ENCODE measurements at regions of chr1 and their contacts with region 1.

Region 1: DNA sequence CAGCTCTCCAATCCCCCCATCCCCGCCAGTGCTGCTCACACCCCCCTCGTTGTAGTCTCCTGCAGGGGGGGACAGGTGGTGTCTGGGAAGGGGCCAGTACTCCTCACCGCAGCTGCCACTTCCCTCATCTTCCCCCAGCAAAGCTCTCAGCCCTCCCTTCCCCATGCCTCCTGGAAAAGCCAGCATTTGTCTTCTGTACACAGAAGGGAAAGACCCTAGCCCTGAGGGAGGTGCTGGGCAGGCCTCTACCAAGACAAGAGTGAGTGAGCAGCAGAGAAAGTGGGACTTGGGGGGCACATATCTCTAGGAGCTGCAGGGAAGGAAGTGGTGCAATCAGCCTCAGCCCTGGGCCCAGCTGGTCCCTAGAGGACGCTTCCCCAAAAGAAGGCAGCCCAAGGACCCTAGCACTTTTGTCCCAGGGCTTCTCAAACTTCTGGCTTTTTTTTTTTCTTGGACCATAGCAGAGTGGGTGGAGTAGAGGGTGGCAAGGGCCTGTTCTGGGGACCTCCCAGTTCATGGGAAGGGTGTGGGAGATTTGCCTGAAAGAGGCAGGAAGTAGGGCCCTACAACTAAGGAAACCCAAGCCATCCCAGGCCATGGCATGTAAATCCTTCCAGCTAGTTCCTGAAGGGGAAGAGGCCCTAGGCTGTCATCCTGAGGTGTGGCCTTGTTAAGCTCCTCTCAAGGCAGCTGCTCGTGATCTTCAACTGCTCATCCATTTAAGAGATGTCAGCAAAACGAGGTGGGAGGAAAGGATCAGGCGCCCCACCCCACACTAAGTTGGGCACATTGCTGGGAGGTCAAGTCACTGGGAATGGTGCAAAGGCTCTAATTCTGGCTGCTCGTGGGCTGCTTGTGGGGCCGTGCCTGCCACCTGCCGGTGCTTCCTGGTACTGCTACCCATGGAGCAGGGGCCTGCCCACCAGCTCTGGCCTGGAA is 12.6 kb downstream of the ZC3H12A start:
- DNase-seq: no peak
- H3K4me3 ChIP-seq: no peak overlapping the region
- H3K27me3 ChIP-seq: no peaks in the 10 kb centered on the region
- CTCF ChIP-seq: peak; percentile 99

Region 2: GRCh38 chr1:37001703-37002102 is 485.2 kb before region 1 on chr1:
- CTCF ChIA-PET with region 1: no interaction called
- POLR2A ChIA-PET with region 1: no interaction called
- DNase-seq: no peak
- H3K4me3 ChIP-seq: no peak overlapping the region
- H3K27me3 ChIP-seq: no peaks in the 10 kb centered on the region
- CTCF ChIP-seq: no peak

Region 3: GRCh38 chr1:37449936-37450335 is 37.0 kb before region 1 on chr1:
- CTCF ChIA-PET with region 1: interaction called, 304 read pairs
- POLR2A ChIA-PET with region 1: no interaction called
- DNase-seq: no peak
- H3K4me3 ChIP-seq: no peak overlapping the region
- H3K27me3 ChIP-seq: no peaks in the 10 kb centered on the region
- CTCF ChIP-seq: no peak

Region 4: DNA sequence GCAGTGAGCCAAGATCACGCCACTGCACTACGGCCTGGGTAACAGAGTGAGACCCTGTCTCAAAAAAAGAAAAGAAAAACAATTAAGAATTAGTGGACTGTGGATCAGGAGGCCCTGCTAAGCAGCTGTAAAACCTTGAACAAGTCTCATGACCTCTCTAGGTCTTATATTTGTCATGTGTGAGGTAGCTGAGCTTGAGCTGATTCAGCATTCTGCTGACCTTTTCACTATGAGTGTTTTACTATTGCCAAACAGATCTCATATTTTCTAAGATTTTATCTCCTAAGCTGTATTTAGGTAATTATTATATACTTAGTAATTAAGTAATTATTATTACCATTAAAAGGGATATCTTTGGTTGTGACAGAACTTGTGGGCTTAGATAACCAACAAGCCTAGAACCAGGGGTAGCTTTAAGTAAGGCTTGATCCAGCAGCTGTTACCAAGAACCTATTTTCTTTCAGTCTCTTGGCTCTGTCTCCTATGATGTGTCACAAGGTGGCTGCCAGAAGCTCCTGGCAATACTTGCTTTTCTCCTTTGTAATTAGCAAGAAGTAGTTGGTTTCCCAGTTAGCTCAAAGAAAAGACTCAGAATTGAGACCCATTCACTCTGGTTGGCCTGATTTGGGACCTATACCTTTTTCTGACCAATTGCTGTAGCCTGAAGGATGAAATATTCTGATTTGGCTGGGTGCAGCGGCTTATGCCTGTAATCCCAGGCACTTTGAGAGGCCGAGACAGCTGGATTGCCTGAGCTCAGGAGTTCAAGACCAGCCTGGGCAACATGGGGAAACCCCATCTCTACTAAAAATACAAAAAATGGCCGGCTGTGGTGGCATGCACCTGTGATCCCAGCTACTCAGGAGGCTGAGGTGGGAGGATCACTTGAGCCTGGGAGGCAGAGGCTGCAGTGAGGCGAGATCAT is 21.1 kb before region 1 on chr1:
- CTCF ChIA-PET with region 1: interaction called, 116 read pairs
- POLR2A ChIA-PET with region 1: interaction called, 4 read pairs
- DNase-seq: no peak
- H3K4me3 ChIP-seq: no peak overlapping the region
- H3K27me3 ChIP-seq: no peaks in the 10 kb centered on the region
- CTCF ChIP-seq: no peak

Region 5: GRCh38 chr1:37474046-37474759 is 12.7 kb before region 1 on chr1 and contains the start of gene ZC3H12A:
- CTCF ChIA-PET with region 1: interaction called, 116 read pairs
- POLR2A ChIA-PET with region 1: no interaction called
- DNase-seq: no peak
- H3K4me3 ChIP-seq: peak within 1 kb of the TSS; percentile 75
- H3K27me3 ChIP-seq: no peaks in the 10 kb centered on the region
- CTCF ChIP-seq: no peak
- polyA plus RNA-seq, gene ZC3H12A: 4.8 and 8.9 TPM in 2 replicates

Region 6: GRCh38 chr1:37498872-37499617 is 12.1 kb after region 1 on chr1:
- CTCF ChIA-PET with region 1: interaction called, 50 read pairs
- POLR2A ChIA-PET with region 1: no interaction called
- DNase-seq: no peak
- H3K4me3 ChIP-seq: no peak overlapping the region
- H3K27me3 ChIP-seq: no peaks in the 10 kb centered on the region
- CTCF ChIP-seq: no peak

Region 7: DNA sequence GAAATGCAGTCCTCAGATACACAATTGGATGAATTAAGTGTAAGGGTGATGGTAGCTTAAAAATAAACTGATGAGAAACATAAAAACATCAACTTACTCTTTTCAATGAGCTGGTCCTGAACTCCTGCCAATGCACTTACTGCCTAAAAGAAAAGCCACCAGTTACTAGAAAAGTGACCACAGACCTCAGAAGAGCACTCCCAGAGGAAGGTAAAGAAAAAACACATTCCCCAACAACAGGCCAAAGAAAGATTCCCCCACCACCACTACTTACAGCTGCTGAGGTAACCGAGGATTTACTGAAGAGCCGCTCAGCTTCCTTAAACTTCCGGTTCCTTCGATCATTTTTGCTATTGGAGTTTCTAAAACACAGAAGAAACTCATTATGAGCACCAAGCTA is 22.2 kb after region 1 on chr1:
- CTCF ChIA-PET with region 1: interaction called, 35 read pairs
- POLR2A ChIA-PET with region 1: no interaction called
- DNase-seq: no peak
- H3K4me3 ChIP-seq: no peak overlapping the region
- H3K27me3 ChIP-seq: no peaks in the 10 kb centered on the region
- CTCF ChIP-seq: 0 out of 2 replicates have a peak, but pooled peaks have one; percentile 26

Region 8: DNA sequence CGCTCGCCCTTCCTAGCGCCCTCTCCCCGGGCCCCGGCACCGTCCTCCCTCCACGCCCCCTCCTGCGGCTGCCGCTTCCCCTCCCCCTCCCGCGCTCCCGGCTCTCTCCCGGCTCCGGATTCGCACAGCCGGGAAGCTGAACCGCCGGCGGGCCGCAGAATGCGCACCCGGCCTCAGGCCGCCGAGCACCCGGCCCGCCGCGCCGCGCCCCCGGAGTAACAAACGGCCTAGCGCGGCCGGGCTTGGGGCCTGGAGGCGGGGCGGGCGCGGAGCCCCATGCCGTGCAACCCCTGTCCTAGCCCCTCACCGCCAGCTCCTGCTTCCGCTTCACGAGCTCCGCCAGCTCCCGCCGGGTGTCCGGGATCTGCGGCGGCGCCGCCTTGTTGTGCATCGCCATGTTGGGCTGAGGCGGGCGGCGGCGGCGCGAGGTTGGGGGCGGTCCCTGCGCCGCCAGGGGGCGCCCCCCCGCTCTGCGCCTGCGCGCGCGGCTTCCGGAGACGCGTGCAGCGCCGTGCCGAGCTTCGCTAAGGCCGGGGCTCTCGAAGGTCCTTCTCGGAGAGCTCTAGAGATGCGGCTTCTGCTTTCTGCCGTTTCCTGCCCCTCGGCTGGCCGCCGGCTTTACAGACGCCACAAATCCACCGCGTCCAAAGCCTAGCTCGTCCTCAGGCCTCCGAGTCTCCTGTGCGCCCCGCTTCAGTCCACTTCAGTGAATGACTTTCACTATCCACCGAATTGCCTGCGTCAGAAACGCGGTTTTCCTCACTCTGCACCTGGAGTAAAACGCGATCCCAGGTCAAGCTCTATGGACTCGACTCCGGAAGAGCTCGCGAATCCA is 27.6 kb after region 1 on chr1 and contains the start of gene MEAF6:
- CTCF ChIA-PET with region 1: interaction called, 35 read pairs
- POLR2A ChIA-PET with region 1: no interaction called
- DNase-seq: no peak
- H3K4me3 ChIP-seq: peak within 1 kb of the TSS; percentile 82
- H3K27me3 ChIP-seq: no peaks in the 10 kb centered on the region
- CTCF ChIP-seq: no peak
- polyA plus RNA-seq, gene MEAF6: 43.1 and 49.6 TPM in 2 replicates

Region 9: DNA sequence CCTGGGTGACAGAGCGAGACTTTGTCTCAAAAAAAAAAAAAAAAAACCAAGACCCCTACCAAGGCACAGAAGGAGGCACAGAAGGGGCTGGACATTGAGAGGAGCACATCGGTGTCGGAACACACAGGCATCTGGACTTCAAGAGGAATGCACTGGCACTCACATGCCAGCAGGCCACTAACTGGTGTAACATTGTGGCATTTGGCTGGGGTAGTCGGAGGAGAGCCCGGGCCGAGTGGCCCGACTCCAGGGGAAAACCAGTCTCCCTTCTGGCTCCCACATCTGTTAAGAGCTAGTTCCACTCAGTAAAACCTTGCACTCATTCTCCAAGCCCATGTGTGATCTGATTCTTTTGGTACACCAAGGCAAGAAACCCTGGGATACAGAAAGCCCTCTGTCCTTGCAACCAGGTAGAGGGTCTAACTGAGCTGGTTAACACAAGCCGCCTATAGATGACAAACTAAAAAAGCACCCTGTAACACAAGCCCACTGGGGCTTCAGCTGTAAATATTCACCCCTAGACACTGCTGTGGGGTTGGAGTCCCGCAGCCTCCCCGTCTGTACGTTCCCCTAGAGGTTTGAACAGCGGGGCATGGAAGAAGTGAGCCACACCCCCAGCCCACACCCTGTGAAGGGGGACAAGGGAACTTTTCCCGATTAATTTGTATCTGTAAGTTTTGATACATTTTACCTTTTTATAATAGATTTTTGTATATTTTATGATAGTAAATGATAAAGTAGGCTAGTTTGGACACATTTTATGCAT is 1486.9 kb after region 1 on chr1:
- CTCF ChIA-PET with region 1: no interaction called
- POLR2A ChIA-PET with region 1: no interaction called
- DNase-seq: no peak
- H3K4me3 ChIP-seq: no peak overlapping the region
- H3K27me3 ChIP-seq: no peaks in the 10 kb centered on the region
- CTCF ChIP-seq: no peak